ENCODE measurements at regions of chr10 and their contacts with region 1.

Region 1: GRCh38 chr10:93482145-93482834 is at the start of gene MYOF:
- DNase-seq: peak in 11 of 14 experiments; percentile 12 to 82 (median 27)
- ATAC-seq: peak; percentile 96
- H3K4me3 ChIP-seq: peak within 1 kb of the TSS; percentile 57
- H3K4me3 Mint-ChIP-seq: peak within 1 kb of the TSS; percentile 84
- H3K27ac ChIP-seq: no peak within 1 kb of the TSS
- H3K27ac Mint-ChIP-seq: no peak within 1 kb of the TSS
- H3K4me1 ChIP-seq: peaks cover 11% of the 10 kb centered on the region
- H3K4me1 Mint-ChIP-seq: peaks cover 15% of the 10 kb centered on the region
- H3K27me3 ChIP-seq: peaks cover 12 to 13% of the 10 kb centered on the region in 2 experiments
- H3K27me3 Mint-ChIP-seq: peaks cover 48% of the 10 kb centered on the region
- CTCF ChIP-seq: peak; percentile 69
- total RNA-seq, gene MYOF: 0.14 to 0.27 TPM

Region 2: DNA sequence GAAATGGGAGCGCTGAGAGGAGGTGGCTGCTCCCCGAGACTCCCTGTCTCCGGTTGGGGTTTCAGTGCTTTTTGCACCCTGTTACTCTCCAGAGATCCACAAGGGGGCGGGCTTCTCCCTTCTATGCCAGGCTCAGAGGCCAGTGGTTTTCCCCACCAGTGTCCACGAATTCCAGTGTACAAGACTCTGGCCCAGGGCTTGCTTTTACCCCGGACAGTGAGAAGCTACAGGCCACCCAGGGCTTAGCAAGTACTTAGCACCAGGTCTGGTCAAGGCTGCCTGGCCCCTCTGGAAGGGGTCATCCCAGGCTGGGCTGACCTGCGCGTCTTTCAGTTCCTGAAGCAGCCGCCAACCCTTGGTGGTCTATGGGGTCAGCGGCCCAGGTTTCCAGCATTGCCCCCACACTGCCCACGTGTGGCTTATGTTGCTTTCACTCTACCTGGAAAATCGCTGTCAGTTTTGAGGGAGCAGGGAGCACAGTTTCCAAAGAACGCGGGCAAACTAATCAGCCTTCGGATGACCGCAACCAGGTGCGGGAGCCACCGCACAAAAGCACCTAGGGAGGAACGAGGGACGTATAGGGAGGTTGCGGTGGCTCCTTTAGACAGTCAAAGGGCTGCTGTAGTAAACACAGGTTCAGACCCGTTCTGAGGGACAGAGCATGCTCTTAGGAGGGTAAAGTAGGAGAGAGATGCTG is 401.8 kb before region 1 on chr10:
- CTCF ChIA-PET with region 1: no interaction called
- POLR2A ChIA-PET with region 1: no interaction called
- intact Hi-C with region 1: loop called in 1 of 2 experiments (anchors 5 kb)
- DNase-seq: peak; percentile 27 to 70 (median 38)
- ATAC-seq: peak; percentile 64
- H3K4me3 ChIP-seq: no peak overlapping the region
- H3K4me3 Mint-ChIP-seq: peak overlapping the region; percentile 23
- H3K27ac ChIP-seq: no peak overlapping the region
- H3K27ac Mint-ChIP-seq: no peak overlapping the region
- H3K4me1 ChIP-seq: peaks cover 7% of the 10 kb centered on the region
- H3K4me1 Mint-ChIP-seq: peaks cover 5% of the 10 kb centered on the region
- H3K27me3 ChIP-seq: peaks cover 24 to 38% of the 10 kb centered on the region in 2 experiments
- H3K27me3 Mint-ChIP-seq: peaks cover 57% of the 10 kb centered on the region
- CTCF ChIP-seq: peak; percentile 76

Region 3: GRCh38 chr10:93115661-93116383 is 366.5 kb before region 1 on chr10:
- CTCF ChIA-PET with region 1: interaction called, 3 read pairs
- POLR2A ChIA-PET with region 1: no interaction called
- intact Hi-C with region 1: loop called in 1 of 2 experiments (anchors 10 kb)
- DNase-seq: peak; percentile 58 to 86 (median 64)
- ATAC-seq: peak; percentile 79
- H3K4me3 ChIP-seq: no peak overlapping the region
- H3K4me3 Mint-ChIP-seq: peak overlapping the region; percentile 1
- H3K27ac ChIP-seq: no peak overlapping the region
- H3K27ac Mint-ChIP-seq: no peak overlapping the region
- H3K4me1 ChIP-seq: peaks cover 14% of the 10 kb centered on the region
- H3K4me1 Mint-ChIP-seq: peaks cover 17% of the 10 kb centered on the region
- H3K27me3 ChIP-seq: no peaks in the 10 kb centered on the region
- H3K27me3 Mint-ChIP-seq: peaks cover 20% of the 10 kb centered on the region
- CTCF ChIP-seq: peak; percentile 49

Region 4: GRCh38 chr10:93376372-93377293 is 105.7 kb before region 1 on chr10:
- CTCF ChIA-PET with region 1: interaction called, 82 read pairs
- POLR2A ChIA-PET with region 1: interaction called, 29 read pairs
- intact Hi-C with region 1: loop called (anchors 1 kb)
- DNase-seq: peak in 10 of 14 experiments; percentile 8 to 84 (median 28)
- ATAC-seq: peak; percentile 84
- H3K4me3 ChIP-seq: no peak overlapping the region
- H3K4me3 Mint-ChIP-seq: no peak overlapping the region
- H3K27ac ChIP-seq: no peak overlapping the region
- H3K27ac Mint-ChIP-seq: no peak overlapping the region
- H3K4me1 ChIP-seq: peaks cover 5% of the 10 kb centered on the region
- H3K4me1 Mint-ChIP-seq: peaks cover 7% of the 10 kb centered on the region
- H3K27me3 ChIP-seq: no peaks in the 10 kb centered on the region
- H3K27me3 Mint-ChIP-seq: peaks cover 13% of the 10 kb centered on the region
- CTCF ChIP-seq: peak; percentile 96

Region 5: DNA sequence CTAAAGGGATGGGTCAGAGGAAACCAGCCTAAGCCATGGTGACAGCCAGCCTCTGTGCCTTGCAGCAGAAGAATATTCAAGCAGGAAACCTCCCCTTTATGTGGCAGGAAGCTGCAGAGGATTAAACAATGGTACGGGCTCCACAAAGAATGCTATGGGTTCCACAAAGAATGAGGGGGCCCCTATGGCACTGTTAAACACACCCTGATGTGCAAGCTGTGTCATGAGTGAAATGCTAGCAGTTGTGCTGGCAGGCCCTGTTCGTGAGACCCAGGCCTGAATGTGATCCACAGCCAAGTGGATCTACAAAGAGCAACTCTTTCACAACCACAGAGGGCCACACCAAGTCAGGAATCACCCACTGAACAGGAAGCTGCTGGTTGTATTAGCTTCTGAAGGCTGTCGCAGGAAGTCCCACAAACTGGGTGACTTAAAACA is 69.0 kb before region 1 on chr10:
- CTCF ChIA-PET with region 1: no interaction called
- POLR2A ChIA-PET with region 1: interaction called, 23 read pairs
- intact Hi-C with region 1: no loop called
- DNase-seq: peak in 13 of 14 experiments; percentile 7 to 76 (median 23)
- ATAC-seq: peak; percentile 86
- H3K4me3 ChIP-seq: peak overlapping the region; percentile 13
- H3K4me3 Mint-ChIP-seq: peak overlapping the region; percentile 57
- H3K27ac ChIP-seq: peak overlapping the region; percentile 41 to 75
- H3K27ac Mint-ChIP-seq: peak overlapping the region; percentile 80
- H3K4me1 ChIP-seq: peaks cover 65% of the 10 kb centered on the region
- H3K4me1 Mint-ChIP-seq: peaks cover 77% of the 10 kb centered on the region
- H3K27me3 ChIP-seq: no peaks in the 10 kb centered on the region
- H3K27me3 Mint-ChIP-seq: no peaks in the 10 kb centered on the region
- CTCF ChIP-seq: no peak

Region 6: GRCh38 chr10:93509816-93510215 is 27.5 kb after region 1 on chr10:
- CTCF ChIA-PET with region 1: interaction called, 6 read pairs
- POLR2A ChIA-PET with region 1: interaction called, 3 read pairs
- intact Hi-C with region 1: loop called (anchors 2 kb)
- DNase-seq: no peak
- ATAC-seq: no peak
- H3K4me3 ChIP-seq: no peak overlapping the region
- H3K4me3 Mint-ChIP-seq: no peak overlapping the region
- H3K27ac ChIP-seq: no peak overlapping the region
- H3K27ac Mint-ChIP-seq: no peak overlapping the region
- H3K4me1 ChIP-seq: no peaks in the 10 kb centered on the region
- H3K4me1 Mint-ChIP-seq: peaks cover 5% of the 10 kb centered on the region
- H3K27me3 ChIP-seq: no peaks in the 10 kb centered on the region
- H3K27me3 Mint-ChIP-seq: no peaks in the 10 kb centered on the region
- CTCF ChIP-seq: no peak

Region 7: GRCh38 chr10:93722501-93722900 is 240.2 kb after region 1 on chr10:
- CTCF ChIA-PET with region 1: no interaction called
- POLR2A ChIA-PET with region 1: no interaction called
- intact Hi-C with region 1: no loop called
- DNase-seq: no peak
- ATAC-seq: no peak
- H3K4me3 ChIP-seq: no peak overlapping the region
- H3K4me3 Mint-ChIP-seq: no peak overlapping the region
- H3K27ac ChIP-seq: no peak overlapping the region
- H3K27ac Mint-ChIP-seq: no peak overlapping the region
- H3K4me1 ChIP-seq: no peaks in the 10 kb centered on the region
- H3K4me1 Mint-ChIP-seq: no peaks in the 10 kb centered on the region
- H3K27me3 ChIP-seq: peaks cover 3 to 20% of the 10 kb centered on the region in 2 experiments
- H3K27me3 Mint-ChIP-seq: peaks cover 62% of the 10 kb centered on the region
- CTCF ChIP-seq: no peak